WTC11 (cell line): ENCODE measurements at regions of chr2 and their contacts with region 1.

Region 1: GRCh38 chr2:179936654-179937053 is 70.4 kb downstream of the CWC22 start:
- DNase-seq: peak; percentile 70
- ATAC-seq: peak; percentile 88
- H3K4me3 Mint-ChIP-seq: no peak overlapping the region
- H3K27ac Mint-ChIP-seq: no peak overlapping the region
- H3K4me1 Mint-ChIP-seq: peaks cover 13% of the 10 kb centered on the region
- H3K27me3 Mint-ChIP-seq: no peaks in the 10 kb centered on the region
- CTCF ChIP-seq: 0 out of 2 replicates have a peak, but pooled peaks have one; percentile 42

Region 2: GRCh38 chr2:179842498-179843153 is 94.0 kb before region 1 on chr2:
- CTCF ChIA-PET with region 1: interaction called, 12 read pairs
- POLR2A ChIA-PET with region 1: no interaction called
- DNase-seq: peak; percentile 54
- ATAC-seq: peak; percentile 96
- H3K4me3 Mint-ChIP-seq: no peak overlapping the region
- H3K27ac Mint-ChIP-seq: no peak overlapping the region
- H3K4me1 Mint-ChIP-seq: peaks cover 11% of the 10 kb centered on the region
- H3K27me3 Mint-ChIP-seq: no peaks in the 10 kb centered on the region
- CTCF ChIP-seq: peak; percentile 36; the same call in 1 of the 2 replicates

Region 3: GRCh38 chr2:179898873-179899272 is 37.8 kb before region 1 on chr2:
- CTCF ChIA-PET with region 1: interaction called, 20 read pairs
- POLR2A ChIA-PET with region 1: no interaction called
- DNase-seq: peak; percentile 67
- ATAC-seq: peak; percentile 100
- H3K4me3 Mint-ChIP-seq: no peak overlapping the region
- H3K27ac Mint-ChIP-seq: no peak overlapping the region
- H3K4me1 Mint-ChIP-seq: peaks cover 4% of the 10 kb centered on the region
- H3K27me3 Mint-ChIP-seq: no peaks in the 10 kb centered on the region
- CTCF ChIP-seq: 0 out of 2 replicates have a peak, but pooled peaks have one; percentile 35